ENCODE measurements at regions of chr1 and their contacts with region 1.

Region 1: DNA sequence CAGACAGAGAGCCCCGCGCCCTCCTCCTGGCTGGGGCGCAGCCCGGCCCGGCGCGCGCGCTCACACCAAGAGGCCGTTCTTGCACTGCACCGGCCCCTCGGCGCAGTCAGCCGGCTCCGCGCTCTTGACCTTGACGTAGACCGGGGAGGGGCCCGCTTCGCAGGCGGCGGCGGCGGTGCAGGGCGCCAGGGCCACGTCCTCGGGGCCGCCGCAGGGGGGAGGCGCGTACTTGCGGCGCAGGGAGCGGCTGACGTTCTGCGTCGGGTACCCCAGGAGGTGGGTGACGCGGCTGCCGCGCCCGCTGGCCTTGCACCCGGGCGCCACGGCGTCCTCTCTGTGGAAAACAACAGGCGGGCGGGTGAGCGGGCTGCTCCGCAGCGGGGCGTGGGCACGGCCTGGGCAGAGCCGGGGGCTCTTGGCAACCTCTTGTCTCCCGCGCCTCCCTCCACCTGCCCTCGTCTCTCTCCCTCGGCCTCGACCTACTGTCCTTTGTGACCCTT is 7.7 kb downstream of the VSIG8 start:
- DNase-seq: peak in 1 of 2 experiments; percentile 73
- H3K4me3 ChIP-seq: peak overlapping the region; percentile 38 to 84 (median 53)
- H3K27ac ChIP-seq: no peak overlapping the region
- H3K4me1 ChIP-seq: no peaks in the 10 kb centered on the region
- H3K27me3 ChIP-seq: peaks cover 7 to 33% (median 24%) of the 10 kb centered on the region in 4 experiments
- CTCF ChIP-seq: no peak
- EP300 ChIP-seq: no peak
- POLR2A ChIP-seq: no peak
- RAD21 ChIP-seq: no peak

Region 2: DNA sequence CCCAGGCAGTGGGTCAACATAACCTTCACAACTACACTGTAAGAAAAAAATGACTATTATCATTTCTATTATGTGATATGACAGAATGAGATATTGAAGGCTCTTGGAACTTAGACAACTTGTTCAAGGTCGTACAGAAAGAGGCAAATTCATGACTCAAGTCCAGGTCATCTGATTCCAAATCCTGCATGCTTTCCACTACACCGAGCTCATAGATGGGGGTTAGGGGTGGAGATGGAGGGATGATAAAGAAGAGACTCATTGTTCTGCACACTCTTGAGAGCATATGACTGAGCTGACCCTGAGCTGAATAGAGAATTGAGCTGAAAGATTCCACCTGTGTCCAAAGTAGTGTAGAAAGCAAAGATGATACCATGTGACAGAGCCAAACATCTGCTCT is 49.8 kb before region 1 on chr1:
- CTCF ChIA-PET with region 1: interaction called, 58 read pairs
- POLR2A ChIA-PET with region 1: interaction called, 4 read pairs
- DNase-seq: no peak
- H3K4me3 ChIP-seq: no peak overlapping the region
- H3K27ac ChIP-seq: no peak overlapping the region
- H3K4me1 ChIP-seq: no peaks in the 10 kb centered on the region
- H3K27me3 ChIP-seq: no peaks in the 10 kb centered on the region
- CTCF ChIP-seq: no peak
- EP300 ChIP-seq: no peak
- POLR2A ChIP-seq: no peak
- RAD21 ChIP-seq: no peak

Region 3: GRCh38 chr1:159829273-159829634 is 25.5 kb before region 1 on chr1:
- CTCF ChIA-PET with region 1: interaction called, 73 read pairs
- POLR2A ChIA-PET with region 1: interaction called, 3 read pairs
- DNase-seq: peak in 1 of 2 experiments; percentile 67
- H3K4me3 ChIP-seq: no peak overlapping the region
- H3K27ac ChIP-seq: no peak overlapping the region
- H3K4me1 ChIP-seq: peaks cover 0 to 4% (median 2%) of the 10 kb centered on the region in 4 experiments; a peak in 1 of 7 replicates
- H3K27me3 ChIP-seq: peaks cover 0 to 15% (median 3%) of the 10 kb centered on the region in 4 experiments; a peak in 6 of 7 replicates
- CTCF ChIP-seq: peak; percentile 73 to 78 (median 78)
- EP300 ChIP-seq: no peak
- POLR2A ChIP-seq: no peak
- RAD21 ChIP-seq: peak; percentile 43 to 59

Region 4: DNA sequence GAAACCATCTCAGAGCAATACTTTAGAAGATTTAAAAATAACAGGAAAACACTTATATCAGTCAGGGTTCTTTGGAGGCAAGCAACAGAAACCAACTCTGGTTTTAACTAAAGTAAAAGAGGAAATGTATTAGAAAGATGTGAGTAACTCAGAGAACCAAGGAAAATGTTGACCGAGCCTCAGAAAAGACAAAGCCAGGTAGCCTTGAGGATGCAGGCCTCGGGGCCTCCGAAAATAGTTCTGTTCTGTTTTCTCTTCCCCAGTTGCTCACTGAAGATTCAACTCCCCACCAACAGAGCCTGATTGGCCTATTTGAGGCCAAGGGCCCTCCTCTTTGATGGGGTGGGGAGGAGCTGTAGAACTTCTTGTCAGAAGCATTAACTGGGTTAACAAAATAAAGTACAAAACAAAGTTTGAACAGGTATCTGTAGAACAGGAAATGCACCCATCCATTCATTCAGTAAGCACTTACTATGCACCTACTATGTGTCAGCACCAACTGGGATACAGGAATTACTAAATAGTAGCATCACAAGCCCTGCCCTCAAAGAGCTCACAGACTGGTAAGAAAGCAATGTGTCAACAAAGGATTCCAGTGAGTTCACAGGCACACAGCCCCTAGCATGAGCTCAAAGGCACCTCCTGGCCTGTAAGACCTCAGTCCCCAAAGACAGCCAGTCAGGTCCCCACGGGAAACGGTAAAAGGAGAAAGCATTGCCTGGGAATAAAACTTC is 15.5 kb before region 1 on chr1:
- CTCF ChIA-PET with region 1: interaction called, 73 read pairs
- POLR2A ChIA-PET with region 1: no interaction called
- DNase-seq: no peak
- H3K4me3 ChIP-seq: no peak overlapping the region
- H3K27ac ChIP-seq: no peak overlapping the region
- H3K4me1 ChIP-seq: no peaks in the 10 kb centered on the region
- H3K27me3 ChIP-seq: peaks cover 0 to 2% (median 0%) of the 10 kb centered on the region in 4 experiments; a peak in 2 of 7 replicates
- CTCF ChIP-seq: no peak
- EP300 ChIP-seq: no peak
- POLR2A ChIP-seq: no peak
- RAD21 ChIP-seq: no peak

Region 5: GRCh38 chr1:159869173-159869572 is 14.4 kb after region 1 on chr1:
- CTCF ChIA-PET with region 1: interaction called, 22 read pairs
- POLR2A ChIA-PET with region 1: interaction called, 3 read pairs
- DNase-seq: no peak
- H3K4me3 ChIP-seq: no peak overlapping the region
- H3K27ac ChIP-seq: no peak overlapping the region
- H3K4me1 ChIP-seq: no peaks in the 10 kb centered on the region; a peak in 1 of 7 replicates
- H3K27me3 ChIP-seq: no peaks in the 10 kb centered on the region
- CTCF ChIP-seq: no peak
- EP300 ChIP-seq: no peak
- POLR2A ChIP-seq: no peak
- RAD21 ChIP-seq: no peak

Measured in H1 (cell line).